Dorsolateral prefrontal cortex (tissue), 120 donors: ENCODE measurements at regions of chr7 and their contacts with region 1.

Region 1: GRCh38 chr7:128031901-128032604 is 816 bp upstream of the LRRC4 start:
- DNase-seq: peak in 4 of 10 donors; percentile 59 to 75 (median 72)
- H3K4me3 ChIP-seq: peak overlapping the region; percentile 56 to 85 (median 72)
- H3K27ac ChIP-seq: peak overlapping the region in 58 of 59 donors; percentile 63 to 96 (median 88)
- H3K27me3 ChIP-seq: no peaks in the 10 kb centered on the region
- CTCF ChIP-seq: peak in 21 of 56 donors; percentile 4 to 36 (median 20)

Region 2: GRCh38 chr7:127585044-127585953 is 446.8 kb before region 1 on chr7 and contains the start of gene GCC1:
- intact Hi-C with region 1: loop called (anchors 2 to 10 kb)
- DNase-seq: peak; percentile 90 to 97 (median 93)
- H3K4me3 ChIP-seq: peak within 1 kb of the TSS; percentile 64 to 100 (median 95)
- H3K27ac ChIP-seq: peak within 1 kb of the TSS in 57 of 59 donors; percentile 21 to 94 (median 82)
- H3K27me3 ChIP-seq: no peaks in the 10 kb centered on the region
- CTCF ChIP-seq: peak in 16 of 56 donors; percentile 1 to 42 (median 20)
- total RNA-seq, gene GCC1: 9.6 to 17.6 (median 12.6) TPM

Region 3: DNA sequence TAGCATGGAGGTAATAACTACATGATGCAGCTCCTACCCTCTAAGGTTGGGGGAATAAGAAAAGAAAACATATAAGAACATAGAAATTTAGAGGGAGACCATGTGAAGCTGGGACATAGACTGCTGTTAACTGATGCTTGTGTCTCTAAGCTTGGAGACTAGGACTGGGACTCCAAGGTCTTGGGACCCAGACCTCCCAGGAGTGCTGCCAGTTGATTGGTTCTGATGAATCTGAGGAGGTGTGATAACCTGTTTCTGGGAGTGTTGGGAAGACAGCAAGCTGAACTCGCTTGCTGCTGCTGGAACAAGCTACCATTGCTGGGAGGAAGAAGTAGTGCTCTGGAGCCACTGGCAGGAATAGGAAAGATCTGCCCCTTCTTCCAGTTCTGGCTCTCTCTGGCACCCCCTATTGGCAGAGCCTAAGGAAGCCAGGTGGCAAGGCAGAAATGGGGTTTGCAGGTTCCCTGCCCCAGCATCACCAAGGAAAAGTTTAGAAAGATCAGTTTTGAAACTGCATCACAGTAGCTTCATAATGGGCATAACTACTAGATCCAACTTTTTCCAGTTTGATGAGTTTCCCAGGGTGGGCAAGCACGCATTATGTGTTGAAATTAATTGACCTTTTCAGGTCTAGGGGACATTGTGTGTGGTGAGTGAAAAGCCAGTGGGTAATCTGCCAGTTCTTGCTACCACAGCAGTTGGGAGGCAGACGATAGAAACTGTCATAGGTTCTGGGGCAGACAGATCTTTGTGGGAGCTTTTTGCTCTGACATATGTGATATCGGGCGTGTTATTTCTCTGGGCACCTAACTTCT is 239.3 kb before region 1 on chr7:
- intact Hi-C with region 1: loop called in 1 of 2 experiments (anchors 10 kb)
- DNase-seq: no peak
- H3K4me3 ChIP-seq: no peak overlapping the region
- H3K27ac ChIP-seq: peak overlapping the region in 2 of 59 donors; percentile 3 to 63
- H3K27me3 ChIP-seq: no peaks in the 10 kb centered on the region
- CTCF ChIP-seq: peak in 55 of 56 donors; percentile 16 to 66 (median 51)

Region 4: GRCh38 chr7:128135515-128136214 is 103.6 kb after region 1 on chr7:
- intact Hi-C with region 1: loop called (anchors 2 kb)
- DNase-seq: peak in 7 of 10 donors; percentile 45 to 83 (median 55)
- H3K4me3 ChIP-seq: peak overlapping the region; percentile 45 to 81 (median 69)
- H3K27ac ChIP-seq: peak overlapping the region in 13 of 59 donors; percentile 1 to 74 (median 33)
- H3K27me3 ChIP-seq: peaks cover 0 to 4% (median 0%) of the 10 kb centered on the region in 45 donors
- CTCF ChIP-seq: peak; percentile 50 to 99 (median 88)

Region 5: GRCh38 chr7:128322040-128322643 is 290.1 kb after region 1 on chr7:
- intact Hi-C with region 1: loop called in 1 of 2 experiments (anchors 10 kb)
- DNase-seq: peak in 1 of 10 donors; percentile 23
- H3K4me3 ChIP-seq: no peak overlapping the region
- H3K27ac ChIP-seq: peak overlapping the region in 15 of 59 donors; percentile 1 to 49 (median 20)
- H3K27me3 ChIP-seq: no peaks in the 10 kb centered on the region
- CTCF ChIP-seq: peak in 52 of 56 donors; percentile 13 to 64 (median 47)